ENCODE measurements at regions of chr22 and their contacts with region 1.

Region 1: GRCh38 chr22:27919222-27919941 is at the start of gene PITPNB:
- DNase-seq: peak; percentile 100
- H3K4me3 Mint-ChIP-seq: peak within 1 kb of the TSS; percentile 97
- H3K27ac Mint-ChIP-seq: peak within 1 kb of the TSS; percentile 99
- H3K4me1 Mint-ChIP-seq: peaks cover 64% of the 10 kb centered on the region
- H3K27me3 Mint-ChIP-seq: peaks cover 4% of the 10 kb centered on the region
- total RNA-seq, gene PITPNB: 148 TPM in 2 replicates

Region 2: DNA sequence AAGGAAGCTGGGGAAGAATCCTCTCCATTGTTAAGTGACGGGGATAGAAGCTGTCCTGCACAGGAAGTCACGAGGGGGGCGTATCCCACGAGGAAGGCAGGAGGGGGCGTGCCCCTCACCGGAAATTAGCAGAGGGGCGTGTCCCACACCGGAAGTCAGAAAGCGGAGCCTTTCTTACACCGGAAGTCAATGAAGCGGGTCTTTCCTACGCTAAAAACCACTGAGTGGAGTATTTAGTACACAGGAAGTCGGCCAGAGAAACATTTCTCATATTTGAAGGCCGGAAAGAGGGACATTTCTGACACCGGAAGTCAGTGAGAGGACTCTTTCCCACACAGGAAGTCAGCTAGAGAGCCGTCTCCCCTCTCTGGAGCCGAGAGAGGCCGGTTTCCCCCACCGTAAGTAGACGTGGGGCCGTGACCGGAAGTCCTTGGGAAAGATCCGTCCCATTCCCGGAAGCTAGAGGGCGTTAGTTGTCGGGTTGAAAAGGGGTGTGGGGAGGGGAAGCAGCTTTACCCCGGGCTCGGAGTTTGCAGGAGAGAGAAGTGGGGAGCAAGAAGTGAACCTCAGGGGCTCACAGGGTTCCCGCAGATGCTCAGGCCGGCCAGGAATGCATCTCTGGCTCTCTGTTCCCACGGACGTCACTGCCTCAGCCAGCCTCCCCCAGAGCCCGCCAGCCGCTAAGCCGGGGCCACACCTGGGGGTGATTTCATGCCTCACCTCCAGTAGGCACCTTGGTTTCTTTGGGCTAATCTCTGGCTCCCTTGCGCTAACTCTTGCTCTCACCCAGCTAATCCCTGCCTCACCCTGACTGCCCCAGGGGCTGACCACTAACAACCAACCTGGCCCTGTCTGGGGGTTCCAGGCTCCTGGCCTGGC is 1246.6 kb before region 1 on chr22:
- intact Hi-C with region 1: loop called (anchors 2 kb)
- DNase-seq: peak; percentile 98
- H3K4me3 Mint-ChIP-seq: peak overlapping the region; percentile 95
- H3K27ac Mint-ChIP-seq: peak overlapping the region; percentile 96
- H3K4me1 Mint-ChIP-seq: peaks cover 67% of the 10 kb centered on the region
- H3K27me3 Mint-ChIP-seq: no peaks in the 10 kb centered on the region

Region 3: GRCh38 chr22:27880778-27881394 is 38.5 kb before region 1 on chr22:
- intact Hi-C with region 1: loop called (anchors 5 kb)
- DNase-seq: peak; percentile 81
- H3K4me3 Mint-ChIP-seq: no peak overlapping the region
- H3K27ac Mint-ChIP-seq: peak overlapping the region; percentile 20
- H3K4me1 Mint-ChIP-seq: peaks cover 19% of the 10 kb centered on the region
- H3K27me3 Mint-ChIP-seq: no peaks in the 10 kb centered on the region

Region 4: GRCh38 chr22:28741758-28742561 is 822.6 kb after region 1 on chr22 and contains the starts of genes CHEK2 and HSCB:
- intact Hi-C with region 1: loop called (anchors 5 kb)
- DNase-seq: peak; percentile 99
- H3K4me3 Mint-ChIP-seq: peak within 1 kb of the TSS; percentile 92
- H3K27ac Mint-ChIP-seq: peak within 1 kb of the TSS; percentile 86
- H3K4me1 Mint-ChIP-seq: peaks cover 25% of the 10 kb centered on the region
- H3K27me3 Mint-ChIP-seq: no peaks in the 10 kb centered on the region
- total RNA-seq, gene CHEK2: 29.8 and 32.7 TPM in 2 replicates
- total RNA-seq, gene HSCB: 12.8 and 14.1 TPM in 2 replicates

Region 5: DNA sequence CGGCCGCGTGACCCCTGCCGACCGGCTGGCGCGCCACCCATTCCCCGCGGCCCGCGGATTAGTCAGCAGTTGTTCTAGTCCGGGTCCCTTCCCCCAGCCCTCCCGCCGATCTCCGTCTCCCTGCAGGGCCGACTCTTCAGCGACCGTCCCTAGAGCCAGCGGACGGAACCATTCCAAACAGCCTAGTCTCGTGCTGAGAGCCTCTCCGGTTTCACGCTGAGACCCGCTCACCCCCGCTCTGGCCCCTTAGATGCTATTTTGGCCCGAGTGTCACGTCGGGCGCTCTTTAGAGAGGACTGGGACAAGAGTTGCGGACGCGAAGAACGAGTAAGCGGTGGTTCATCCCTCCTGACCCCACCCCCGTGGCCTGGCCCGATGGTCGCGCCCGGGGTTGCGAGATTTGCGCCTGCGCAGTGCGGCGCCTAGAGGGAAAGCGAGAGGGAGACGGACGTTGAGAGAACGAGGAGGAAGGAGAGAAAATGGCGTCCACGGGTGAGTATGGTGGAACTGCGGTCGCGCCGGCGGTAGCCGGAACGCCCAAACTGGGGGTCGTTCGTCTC is 1348.6 kb after region 1 on chr22 and contains the starts of genes EWSR1 and RHBDD3:
- intact Hi-C with region 1: loop called (anchors 2 kb)
- DNase-seq: peak; percentile 99
- H3K4me3 Mint-ChIP-seq: peak within 1 kb of the TSS; percentile 99
- H3K27ac Mint-ChIP-seq: peak within 1 kb of the TSS; percentile 99
- H3K4me1 Mint-ChIP-seq: peaks cover 40% of the 10 kb centered on the region
- H3K27me3 Mint-ChIP-seq: peaks cover 3% of the 10 kb centered on the region
- total RNA-seq, gene EWSR1: 445 and 446 TPM in 2 replicates
- total RNA-seq, gene RHBDD3: 49.5 and 51.9 TPM in 2 replicates